ENCODE measurements at regions of chr3 and their contacts with region 1.

Region 1: GRCh38 chr3:157532529-157533297 is 29.5 kb upstream of the VEPH1 start:
- DNase-seq: peak in 1 of 2 donors; percentile 29
- ATAC-seq: peak; percentile 62 to 90 (median 82)
- H3K4me3 ChIP-seq: no peak overlapping the region
- H3K27ac ChIP-seq: peak overlapping the region in 1 of 10 donors; percentile 61
- H3K4me1 ChIP-seq: peaks cover 0 to 16% (median 0%) of the 10 kb centered on the region in 9 donors
- H3K27me3 ChIP-seq: no peaks in the 10 kb centered on the region
- CTCF ChIP-seq: peak; percentile 34 to 76 (median 71)

Region 2: GRCh38 chr3:155876503-155876902 is 1656.2 kb before region 1 on chr3:
- intact Hi-C with region 1: loop called in 1 of 10 experiments (anchors 5 kb)
- DNase-seq: no peak
- ATAC-seq: no peak
- H3K4me3 ChIP-seq: no peak overlapping the region
- H3K27ac ChIP-seq: no peak overlapping the region
- H3K4me1 ChIP-seq: peaks cover 0 to 47% (median 26%) of the 10 kb centered on the region in 9 donors
- H3K27me3 ChIP-seq: no peaks in the 10 kb centered on the region
- CTCF ChIP-seq: no peak

Region 3: GRCh38 chr3:157572559-157573270 is 40.0 kb after region 1 on chr3:
- intact Hi-C with region 1: loop called in 7 of 10 experiments (anchors 1 to 5 kb)
- DNase-seq: peak in 1 of 2 donors; percentile 17
- ATAC-seq: peak in 2 of 8 donors; percentile 33 to 39
- H3K4me3 ChIP-seq: no peak overlapping the region
- H3K27ac ChIP-seq: no peak overlapping the region
- H3K4me1 ChIP-seq: no peaks in the 10 kb centered on the region
- H3K27me3 ChIP-seq: no peaks in the 10 kb centered on the region
- CTCF ChIP-seq: peak; percentile 35 to 80 (median 66)

Region 4: GRCh38 chr3:157700408-157700807 is 167.7 kb after region 1 on chr3:
- intact Hi-C with region 1: no loop called
- DNase-seq: no peak
- ATAC-seq: no peak
- H3K4me3 ChIP-seq: no peak overlapping the region
- H3K27ac ChIP-seq: no peak overlapping the region
- H3K4me1 ChIP-seq: no peaks in the 10 kb centered on the region
- H3K27me3 ChIP-seq: peaks cover 0 to 5% (median 0%) of the 10 kb centered on the region in 7 donors
- CTCF ChIP-seq: no peak